Gastrocnemius medialis (tissue), 4 donors: ENCODE measurements at regions of chr14 and their contacts with region 1.

Region 1: DNA sequence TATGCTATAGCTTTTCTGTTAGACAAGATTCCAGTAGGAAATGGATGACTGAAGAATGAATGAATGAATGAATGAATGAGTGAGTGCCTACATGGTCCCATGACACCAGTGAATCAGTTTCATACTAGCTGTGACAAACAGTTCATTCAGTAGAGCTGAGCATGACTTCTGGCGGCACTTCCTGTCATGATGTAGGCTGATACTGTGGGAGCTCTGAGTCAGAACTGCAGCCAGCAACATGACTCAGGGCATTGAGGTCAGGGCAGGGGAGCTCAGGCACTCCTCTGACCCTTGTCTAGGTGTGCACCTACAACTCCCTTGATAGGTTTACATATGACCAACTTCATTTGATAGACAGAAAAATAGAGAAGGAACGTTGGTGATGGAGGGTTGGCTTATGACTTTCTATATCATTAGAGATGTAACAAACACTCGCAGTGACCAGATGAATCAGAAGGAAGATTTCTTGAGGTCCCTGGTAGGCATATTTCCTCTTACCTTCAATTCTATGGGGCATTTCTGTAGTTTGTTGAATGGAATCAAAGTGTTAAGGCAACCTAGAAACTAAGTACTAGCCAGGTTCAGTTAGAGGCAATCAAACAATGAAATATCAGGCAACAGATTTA is 139.3 kb upstream of the ARHGAP5 start:
- DNase-seq: peak; percentile 41 to 51
- ATAC-seq: peak; percentile 90
- H3K4me3 ChIP-seq: no peak overlapping the region
- H3K27ac ChIP-seq: peak overlapping the region in 1 of 4 donors; percentile 3
- H3K4me1 ChIP-seq: peaks cover 0 to 8% of the 10 kb centered on the region in 2 donors
- H3K27me3 ChIP-seq: no peaks in the 10 kb centered on the region
- CTCF ChIP-seq: no peak
- POLR2A ChIP-seq: no peak

Region 2: DNA sequence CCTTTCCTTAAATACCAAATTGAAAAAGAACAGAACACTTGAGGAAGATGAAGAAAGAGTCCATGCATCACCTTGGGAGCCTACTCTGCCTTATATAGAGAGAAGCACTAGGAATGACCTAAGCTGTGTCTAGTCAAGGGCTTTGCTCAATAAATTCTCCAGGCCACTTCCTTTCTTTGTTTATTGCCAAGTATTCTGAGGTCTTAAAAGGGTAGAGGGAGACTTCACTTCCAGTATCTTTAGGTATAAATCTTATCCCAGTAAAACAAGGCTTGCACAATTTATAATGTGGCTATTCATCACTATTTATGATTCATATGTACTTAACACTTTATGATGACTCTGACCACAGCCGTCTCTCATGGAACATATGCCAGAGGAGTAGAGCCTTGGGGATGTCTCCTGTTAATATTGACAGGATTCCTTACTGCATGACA is 54.2 kb after region 1 on chr14:
- in situ Hi-C with region 1: no loop called
- intact Hi-C with region 1: loop called (anchors 5 kb)
- DNase-seq: no peak
- ATAC-seq: peak in 1 of 2 donors; percentile 53
- H3K4me3 ChIP-seq: no peak overlapping the region
- H3K27ac ChIP-seq: no peak overlapping the region
- H3K4me1 ChIP-seq: peaks cover 35 to 36% of the 10 kb centered on the region in 2 donors
- H3K27me3 ChIP-seq: no peaks in the 10 kb centered on the region
- CTCF ChIP-seq: no peak
- POLR2A ChIP-seq: no peak

Region 3: DNA sequence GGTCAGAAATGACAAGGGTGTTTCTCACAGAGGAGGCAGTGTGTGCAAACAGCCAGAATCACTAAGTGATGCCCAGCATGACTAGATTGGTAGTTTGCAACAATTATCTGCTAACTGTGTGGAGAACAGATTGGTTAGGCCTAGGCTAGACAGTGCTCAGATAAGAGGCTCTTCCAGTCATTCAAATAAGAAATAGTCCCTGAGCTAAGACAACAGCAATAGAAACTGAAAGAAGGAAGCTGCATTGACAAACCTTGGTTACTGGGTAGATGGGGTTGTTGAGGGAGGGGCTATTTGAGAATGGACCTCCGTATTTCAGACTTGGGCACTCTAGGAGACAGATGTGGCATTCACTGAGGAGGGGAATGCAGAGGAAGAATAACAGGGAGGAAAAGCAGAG is 745.8 kb after region 1 on chr14:
- in situ Hi-C with region 1: no loop called
- intact Hi-C with region 1: no loop called
- DNase-seq: no peak
- ATAC-seq: no peak
- H3K4me3 ChIP-seq: no peak overlapping the region
- H3K27ac ChIP-seq: no peak overlapping the region
- H3K4me1 ChIP-seq: peaks cover 0 to 10% of the 10 kb centered on the region in 2 donors
- H3K27me3 ChIP-seq: no peaks in the 10 kb centered on the region
- CTCF ChIP-seq: no peak
- POLR2A ChIP-seq: no peak